K562 (cell line): ENCODE measurements at regions of chr6 and their contacts with region 1.

Region 1: GRCh38 chr6:164344801-164345291 is 930.3 kb downstream of the QKI start:
- DNase-seq: no peak
- ATAC-seq: no peak
- H3K4me3 ChIP-seq: no peak overlapping the region
- H3K27ac ChIP-seq: no peak overlapping the region; the same call in 2 of the 3 replicates
- H3K4me1 ChIP-seq: peaks cover 0 to 7% of the 10 kb centered on the region in 2 experiments; a peak in 2 of 5 replicates
- H3K27me3 ChIP-seq: no peaks in the 10 kb centered on the region
- CTCF ChIP-seq: no peak
- EP300 ChIP-seq: no peak
- POLR2A ChIP-seq: no peak
- RAD21 ChIP-seq: no peak

Region 2: GRCh38 chr6:164106345-164106769 is 238.5 kb before region 1 on chr6:
- CTCF ChIA-PET with region 1: no interaction called
- POLR2A ChIA-PET with region 1: no interaction called
- in situ Hi-C with region 1: no loop called
- intact Hi-C with region 1: no loop called
- DNase-seq: peak; percentile 68 to 74 (median 70)
- ATAC-seq: peak; percentile 86
- H3K4me3 ChIP-seq: peak overlapping the region; percentile 14; the same call in 1 of the 2 replicates
- H3K27ac ChIP-seq: no peak overlapping the region
- H3K4me1 ChIP-seq: peaks cover 5 to 21% of the 10 kb centered on the region in 2 experiments; a peak in 4 of 5 replicates
- H3K27me3 ChIP-seq: peaks cover 2 to 12% of the 10 kb centered on the region in 2 experiments; a peak in 2 of 5 replicates
- CTCF ChIP-seq: peak; percentile 61 to 82 (median 68)
- EP300 ChIP-seq: no peak
- POLR2A ChIP-seq: no peak
- RAD21 ChIP-seq: peak; percentile 60 to 72

Region 3: DNA sequence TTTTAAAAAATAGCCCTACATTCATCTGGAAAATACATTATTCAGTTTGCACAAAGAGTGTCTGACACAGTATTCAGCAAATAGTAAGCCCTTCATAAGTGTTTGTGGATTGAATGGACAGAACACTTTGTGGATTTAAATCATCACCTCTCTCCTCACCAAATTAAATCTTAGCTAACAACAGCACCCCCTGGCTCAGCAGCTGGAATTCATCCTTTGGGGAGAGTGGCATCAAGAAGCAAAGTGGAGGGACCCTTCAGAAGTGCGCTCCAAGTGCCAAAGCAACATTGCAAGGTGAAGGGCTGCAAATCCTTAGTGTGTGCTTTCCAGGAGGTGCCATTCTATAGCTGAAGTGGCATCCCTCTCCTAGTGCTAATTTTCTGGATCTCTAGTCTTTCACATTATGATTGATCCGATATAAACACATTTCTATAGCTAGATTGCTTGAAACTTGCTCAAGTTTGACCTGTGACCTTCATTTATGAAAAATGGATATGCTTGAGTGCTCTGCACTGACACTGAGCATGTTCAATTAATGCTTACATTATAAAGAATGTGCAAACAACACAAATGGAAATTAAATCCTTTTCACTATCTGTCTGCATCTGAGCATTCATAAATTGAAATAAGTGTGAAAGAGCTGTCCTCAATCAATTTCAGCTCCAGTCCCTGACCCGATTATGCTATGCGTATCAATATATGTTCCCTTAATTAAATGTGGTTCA is 72.9 kb after region 1 on chr6:
- CTCF ChIA-PET with region 1: no interaction called
- POLR2A ChIA-PET with region 1: no interaction called
- in situ Hi-C with region 1: no loop called
- intact Hi-C with region 1: loop called (anchors 5 kb)
- DNase-seq: no peak
- ATAC-seq: peak; percentile 32; the same call in 2 of the 3 replicates
- H3K4me3 ChIP-seq: no peak overlapping the region
- H3K27ac ChIP-seq: no peak overlapping the region
- H3K4me1 ChIP-seq: no peaks in the 10 kb centered on the region; a peak in 1 of 5 replicates
- H3K27me3 ChIP-seq: no peaks in the 10 kb centered on the region
- CTCF ChIP-seq: peak in 2 of 3 experiments; percentile 11 to 17; a peak in 1 of 6 replicates
- EP300 ChIP-seq: no peak
- POLR2A ChIP-seq: no peak
- RAD21 ChIP-seq: no peak

Region 4: GRCh38 chr6:164477101-164477500 is 132.3 kb after region 1 on chr6:
- CTCF ChIA-PET with region 1: no interaction called
- POLR2A ChIA-PET with region 1: no interaction called
- in situ Hi-C with region 1: no loop called
- intact Hi-C with region 1: no loop called
- DNase-seq: no peak
- ATAC-seq: no peak
- H3K4me3 ChIP-seq: no peak overlapping the region
- H3K27ac ChIP-seq: no peak overlapping the region
- H3K4me1 ChIP-seq: no peaks in the 10 kb centered on the region
- H3K27me3 ChIP-seq: no peaks in the 10 kb centered on the region
- CTCF ChIP-seq: no peak
- EP300 ChIP-seq: no peak
- POLR2A ChIP-seq: no peak
- RAD21 ChIP-seq: no peak

Region 5: GRCh38 chr6:164927288-164928056 is 582.6 kb after region 1 on chr6:
- CTCF ChIA-PET with region 1: no interaction called
- POLR2A ChIA-PET with region 1: no interaction called
- in situ Hi-C with region 1: no loop called
- intact Hi-C with region 1: loop called (anchors 2 kb)
- DNase-seq: peak; percentile 48 to 65 (median 58)
- ATAC-seq: peak; percentile 98
- H3K4me3 ChIP-seq: no peak overlapping the region
- H3K27ac ChIP-seq: no peak overlapping the region
- H3K4me1 ChIP-seq: no peaks in the 10 kb centered on the region
- H3K27me3 ChIP-seq: no peaks in the 10 kb centered on the region
- CTCF ChIP-seq: peak; percentile 78 to 92 (median 85)
- EP300 ChIP-seq: no peak
- POLR2A ChIP-seq: no peak
- RAD21 ChIP-seq: peak; percentile 95

Region 6: GRCh38 chr6:164967102-164967501 is 622.3 kb after region 1 on chr6:
- CTCF ChIA-PET with region 1: no interaction called
- POLR2A ChIA-PET with region 1: no interaction called
- in situ Hi-C with region 1: no loop called
- intact Hi-C with region 1: no loop called
- DNase-seq: no peak
- ATAC-seq: no peak
- H3K4me3 ChIP-seq: no peak overlapping the region
- H3K27ac ChIP-seq: no peak overlapping the region
- H3K4me1 ChIP-seq: no peaks in the 10 kb centered on the region
- H3K27me3 ChIP-seq: no peaks in the 10 kb centered on the region
- CTCF ChIP-seq: no peak
- EP300 ChIP-seq: no peak
- POLR2A ChIP-seq: no peak
- RAD21 ChIP-seq: no peak